Activated CD4-positive, alpha-beta memory T cell treated with anti-CD3 and anti-CD28 coated beads for 36 hours (primary cell): ENCODE measurements at regions of chr3 and their contacts with region 1.

Region 1: DNA sequence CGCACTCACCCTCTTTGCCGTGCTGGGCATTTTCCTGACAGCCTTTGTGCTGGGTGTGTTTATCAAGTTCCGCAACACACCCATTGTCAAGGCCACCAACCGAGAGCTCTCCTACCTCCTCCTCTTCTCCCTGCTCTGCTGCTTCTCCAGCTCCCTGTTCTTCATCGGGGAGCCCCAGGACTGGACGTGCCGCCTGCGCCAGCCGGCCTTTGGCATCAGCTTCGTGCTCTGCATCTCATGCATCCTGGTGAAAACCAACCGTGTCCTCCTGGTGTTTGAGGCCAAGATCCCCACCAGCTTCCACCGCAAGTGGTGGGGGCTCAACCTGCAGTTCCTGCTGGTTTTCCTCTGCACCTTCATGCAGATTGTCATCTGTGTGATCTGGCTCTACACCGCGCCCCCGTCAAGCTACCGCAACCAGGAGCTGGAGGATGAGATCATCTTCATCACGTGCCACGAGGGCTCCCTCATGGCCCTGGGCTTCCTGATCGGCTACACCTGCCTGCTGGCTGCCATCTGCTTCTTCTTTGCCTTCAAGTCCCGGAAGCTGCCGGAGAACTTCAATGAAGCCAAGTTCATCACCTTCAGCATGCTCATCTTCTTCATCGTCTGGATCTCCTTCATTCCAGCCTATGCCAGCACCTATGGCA is 41.1 kb upstream of the CSTA start:
- DNase-seq: no peak
- H3K4me3 Mint-ChIP-seq: no peak overlapping the region
- H3K27ac Mint-ChIP-seq: no peak overlapping the region
- H3K4me1 Mint-ChIP-seq: no peaks in the 10 kb centered on the region
- H3K27me3 Mint-ChIP-seq: no peaks in the 10 kb centered on the region

Region 2: GRCh38 chr3:122271246-122271898 is 12.5 kb before region 1 on chr3:
- CTCF ChIA-PET with region 1: interaction called, 10 read pairs
- POLR2A ChIA-PET with region 1: no interaction called
- intact Hi-C with region 1: no loop called
- DNase-seq: no peak
- H3K4me3 Mint-ChIP-seq: no peak overlapping the region
- H3K27ac Mint-ChIP-seq: no peak overlapping the region
- H3K4me1 Mint-ChIP-seq: peaks cover 26% of the 10 kb centered on the region
- H3K27me3 Mint-ChIP-seq: no peaks in the 10 kb centered on the region